ENCODE measurements at regions of chr15 and their contacts with region 1.

Region 1: GRCh38 chr15:59528965-59529402 is 82.6 kb upstream of the GCNT3 start:
- DNase-seq: peak; percentile 76 to 85
- H3K4me3 ChIP-seq: no peak overlapping the region
- H3K27ac ChIP-seq: no peak overlapping the region
- H3K4me1 ChIP-seq: no peaks in the 10 kb centered on the region; the same call in 1 of the 2 replicates
- H3K27me3 ChIP-seq: no peaks in the 10 kb centered on the region
- CTCF ChIP-seq: peak; percentile 86

Region 2: GRCh38 chr15:58070801-58071418 is 1458.1 kb before region 1 on chr15:
- CTCF ChIA-PET with region 1: no interaction called
- POLR2A ChIA-PET with region 1: no interaction called
- intact Hi-C with region 1: loop called (anchors 10 kb)
- DNase-seq: peak in 1 of 2 experiments; percentile 57
- H3K4me3 ChIP-seq: no peak overlapping the region
- H3K27ac ChIP-seq: no peak overlapping the region
- H3K4me1 ChIP-seq: no peaks in the 10 kb centered on the region
- H3K27me3 ChIP-seq: no peaks in the 10 kb centered on the region
- CTCF ChIP-seq: peak; percentile 86

Region 3: GRCh38 chr15:58475573-58476524 is 1053.1 kb before region 1 on chr15:
- CTCF ChIA-PET with region 1: interaction called, 11 read pairs
- POLR2A ChIA-PET with region 1: no interaction called
- intact Hi-C with region 1: no loop called
- DNase-seq: peak; percentile 8 to 52
- H3K4me3 ChIP-seq: no peak overlapping the region
- H3K27ac ChIP-seq: no peak overlapping the region
- H3K4me1 ChIP-seq: peaks cover 44% of the 10 kb centered on the region
- H3K27me3 ChIP-seq: no peaks in the 10 kb centered on the region
- CTCF ChIP-seq: no peak

Region 4: GRCh38 chr15:59020322-59020721 is 508.7 kb before region 1 on chr15:
- CTCF ChIA-PET with region 1: interaction called, 18 read pairs
- POLR2A ChIA-PET with region 1: no interaction called
- intact Hi-C with region 1: no loop called
- DNase-seq: no peak
- H3K4me3 ChIP-seq: no peak overlapping the region
- H3K27ac ChIP-seq: no peak overlapping the region
- H3K4me1 ChIP-seq: no peaks in the 10 kb centered on the region
- H3K27me3 ChIP-seq: no peaks in the 10 kb centered on the region
- CTCF ChIP-seq: no peak

Region 5: GRCh38 chr15:59158701-59159034 is 370.3 kb before region 1 on chr15:
- CTCF ChIA-PET with region 1: no interaction called
- POLR2A ChIA-PET with region 1: no interaction called
- intact Hi-C with region 1: no loop called
- DNase-seq: no peak
- H3K4me3 ChIP-seq: no peak overlapping the region
- H3K27ac ChIP-seq: no peak overlapping the region
- H3K4me1 ChIP-seq: no peaks in the 10 kb centered on the region
- H3K27me3 ChIP-seq: no peaks in the 10 kb centered on the region
- CTCF ChIP-seq: no peak

Region 6: DNA sequence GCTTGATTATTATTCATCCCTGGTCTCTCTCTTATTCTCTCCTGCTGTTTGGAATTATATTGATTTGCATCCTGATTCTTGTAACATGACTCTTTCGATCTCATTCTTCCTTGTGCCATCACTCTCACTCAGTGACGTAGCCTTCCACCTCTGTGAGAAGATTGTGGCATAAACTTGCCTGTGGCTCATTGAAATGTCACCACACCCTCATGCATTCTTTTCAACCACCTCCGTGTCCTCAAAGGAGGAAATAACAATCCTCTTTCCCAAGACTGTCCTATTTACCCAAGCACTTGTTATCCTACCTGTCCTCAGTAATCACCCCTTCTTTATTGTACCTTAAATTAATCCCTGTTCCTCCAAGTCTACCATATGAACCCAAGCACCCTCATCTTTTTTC is 41.4 kb after region 1 on chr15:
- CTCF ChIA-PET with region 1: no interaction called
- POLR2A ChIA-PET with region 1: no interaction called
- intact Hi-C with region 1: loop called (anchors 5 kb)
- DNase-seq: peak; percentile 67 to 98
- H3K4me3 ChIP-seq: no peak overlapping the region
- H3K27ac ChIP-seq: peak overlapping the region; percentile 95
- H3K4me1 ChIP-seq: peaks cover 35% of the 10 kb centered on the region
- H3K27me3 ChIP-seq: no peaks in the 10 kb centered on the region
- CTCF ChIP-seq: no peak

Region 7: GRCh38 chr15:59622289-59622688 is 93.3 kb after region 1 on chr15:
- CTCF ChIA-PET with region 1: interaction called, 19 read pairs
- POLR2A ChIA-PET with region 1: no interaction called
- intact Hi-C with region 1: no loop called
- DNase-seq: peak; percentile 45 to 68
- H3K4me3 ChIP-seq: no peak overlapping the region
- H3K27ac ChIP-seq: no peak overlapping the region
- H3K4me1 ChIP-seq: no peaks in the 10 kb centered on the region
- H3K27me3 ChIP-seq: no peaks in the 10 kb centered on the region
- CTCF ChIP-seq: peak; percentile 69